ENCODE measurements at regions of chr7 and their contacts with region 1.

Region 1: GRCh38 chr7:26365077-26365900 is 73.6 kb downstream of the SNX10 start:
- DNase-seq: peak; percentile 72
- H3K4me3 Mint-ChIP-seq: no peak overlapping the region
- H3K27ac Mint-ChIP-seq: no peak overlapping the region
- H3K4me1 Mint-ChIP-seq: no peaks in the 10 kb centered on the region
- H3K27me3 Mint-ChIP-seq: no peaks in the 10 kb centered on the region
- CTCF ChIP-seq: peak; percentile 82

Region 2: GRCh38 chr7:26078437-26079336 is 286.6 kb before region 1 on chr7:
- CTCF ChIA-PET with region 1: interaction called, 5 read pairs
- POLR2A ChIA-PET with region 1: no interaction called
- intact Hi-C with region 1: loop called (anchors 5 kb)
- DNase-seq: peak; percentile 39
- H3K4me3 Mint-ChIP-seq: no peak overlapping the region
- H3K27ac Mint-ChIP-seq: no peak overlapping the region
- H3K4me1 Mint-ChIP-seq: no peaks in the 10 kb centered on the region
- H3K27me3 Mint-ChIP-seq: no peaks in the 10 kb centered on the region
- CTCF ChIP-seq: peak; percentile 20

Region 3: DNA sequence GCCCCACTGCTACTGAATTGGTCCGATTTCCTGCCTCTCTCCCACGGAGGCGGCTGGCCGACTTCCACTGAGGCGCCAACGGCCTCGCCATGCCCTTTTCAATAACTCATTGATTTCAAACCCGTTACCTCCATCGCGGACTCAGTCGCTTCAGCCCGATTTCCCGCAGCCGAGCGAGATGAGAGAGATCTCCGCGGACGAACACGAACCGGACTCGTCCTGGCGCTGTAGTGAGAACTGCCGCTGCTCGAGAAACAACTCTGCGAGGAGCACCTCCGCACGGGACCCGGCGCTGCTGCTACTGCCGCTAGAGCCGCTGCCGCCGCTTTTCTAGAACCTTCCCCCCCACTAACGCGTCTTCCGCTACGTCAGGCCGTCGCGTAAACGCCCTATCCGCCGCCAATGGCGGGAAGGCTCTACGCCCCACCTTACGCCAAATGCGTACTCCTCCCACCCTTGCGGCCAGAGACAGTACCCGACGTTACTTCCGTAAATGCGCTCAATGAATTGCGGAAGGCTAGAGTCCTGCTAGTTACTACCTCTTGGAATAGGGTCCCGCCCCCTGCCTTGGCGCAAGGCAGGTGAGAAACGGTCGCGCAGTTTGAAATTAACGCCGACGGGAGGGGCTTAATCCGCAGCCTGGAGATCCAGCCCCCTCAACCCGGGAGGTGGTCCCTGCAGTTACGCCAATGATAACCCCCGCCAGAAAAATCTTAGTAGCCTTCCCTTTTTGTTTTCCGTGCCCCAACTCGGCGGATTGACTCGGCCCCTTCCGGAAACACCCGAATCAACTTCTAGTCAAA is 164.6 kb before region 1 on chr7 and contains the start of gene HNRNPA2B1:
- CTCF ChIA-PET with region 1: interaction called, 12 read pairs
- POLR2A ChIA-PET with region 1: interaction called, 11 read pairs
- intact Hi-C with region 1: loop called (anchors 1 kb)
- DNase-seq: peak; percentile 98
- H3K4me3 Mint-ChIP-seq: peak within 1 kb of the TSS; percentile 98
- H3K27ac Mint-ChIP-seq: peak within 1 kb of the TSS; percentile 99
- H3K4me1 Mint-ChIP-seq: peaks cover 37% of the 10 kb centered on the region
- H3K27me3 Mint-ChIP-seq: no peaks in the 10 kb centered on the region
- CTCF ChIP-seq: no peak
- total RNA-seq, gene HNRNPA2B1: 592 and 646 TPM in 2 replicates

Region 4: GRCh38 chr7:26346611-26347203 is 18.6 kb before region 1 on chr7:
- CTCF ChIA-PET with region 1: interaction called, 23 read pairs
- POLR2A ChIA-PET with region 1: no interaction called
- intact Hi-C with region 1: no loop called
- DNase-seq: peak; percentile 80
- H3K4me3 Mint-ChIP-seq: no peak overlapping the region
- H3K27ac Mint-ChIP-seq: no peak overlapping the region
- H3K4me1 Mint-ChIP-seq: peaks cover 20% of the 10 kb centered on the region
- H3K27me3 Mint-ChIP-seq: no peaks in the 10 kb centered on the region
- CTCF ChIP-seq: no peak

Region 5: GRCh38 chr7:26490650-26491624 is 125.6 kb after region 1 on chr7:
- CTCF ChIA-PET with region 1: interaction called, 56 read pairs
- POLR2A ChIA-PET with region 1: interaction called, 10 read pairs
- intact Hi-C with region 1: no loop called
- DNase-seq: peak; percentile 83
- H3K4me3 Mint-ChIP-seq: peak overlapping the region; percentile 33
- H3K27ac Mint-ChIP-seq: peak overlapping the region; percentile 32
- H3K4me1 Mint-ChIP-seq: peaks cover 20% of the 10 kb centered on the region
- H3K27me3 Mint-ChIP-seq: no peaks in the 10 kb centered on the region
- CTCF ChIP-seq: no peak

Region 6: DNA sequence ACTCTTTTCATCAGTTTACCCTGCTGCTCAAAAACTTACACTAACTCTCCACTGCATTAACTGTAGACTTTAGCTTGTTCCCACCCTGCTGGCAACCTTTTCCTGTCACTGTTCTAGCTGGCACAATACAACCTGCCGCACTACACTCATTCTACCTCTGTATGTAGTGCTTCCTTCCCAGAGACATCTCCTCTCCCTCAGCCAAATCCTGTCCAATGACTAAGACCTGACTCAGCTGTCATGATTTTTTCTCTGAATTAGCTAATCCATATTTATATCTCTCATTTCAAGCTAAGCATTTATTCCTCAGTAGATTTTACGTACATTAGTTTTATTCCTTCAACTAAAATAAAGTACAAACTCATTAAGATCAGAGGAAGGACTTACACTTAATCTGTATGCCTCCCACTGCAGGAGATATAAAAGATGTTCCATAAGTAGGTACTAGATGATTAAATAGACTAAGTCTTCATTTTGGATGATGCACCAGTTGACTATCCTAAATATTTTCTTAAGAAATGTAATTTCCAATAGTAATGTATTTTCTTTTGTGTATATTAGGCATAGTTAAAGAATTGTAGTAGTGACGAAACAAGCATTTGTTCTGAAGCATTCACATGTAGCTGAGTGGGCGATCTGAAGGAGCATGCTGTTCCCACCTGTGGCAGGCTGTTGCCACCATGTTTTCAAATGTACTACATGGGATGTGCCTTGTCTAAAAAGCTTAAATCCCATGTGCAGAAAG is 310.0 kb after region 1 on chr7:
- CTCF ChIA-PET with region 1: interaction called, 22 read pairs
- POLR2A ChIA-PET with region 1: interaction called, 6 read pairs
- intact Hi-C with region 1: no loop called
- DNase-seq: peak; percentile 75
- H3K4me3 Mint-ChIP-seq: no peak overlapping the region
- H3K27ac Mint-ChIP-seq: peak overlapping the region; percentile 74
- H3K4me1 Mint-ChIP-seq: peaks cover 10% of the 10 kb centered on the region
- H3K27me3 Mint-ChIP-seq: no peaks in the 10 kb centered on the region
- CTCF ChIP-seq: no peak

Measured in MCF 10A (cell line).